AG04449 (cell line): ENCODE measurements at regions of chr12 and their contacts with region 1.

Region 1: DNA sequence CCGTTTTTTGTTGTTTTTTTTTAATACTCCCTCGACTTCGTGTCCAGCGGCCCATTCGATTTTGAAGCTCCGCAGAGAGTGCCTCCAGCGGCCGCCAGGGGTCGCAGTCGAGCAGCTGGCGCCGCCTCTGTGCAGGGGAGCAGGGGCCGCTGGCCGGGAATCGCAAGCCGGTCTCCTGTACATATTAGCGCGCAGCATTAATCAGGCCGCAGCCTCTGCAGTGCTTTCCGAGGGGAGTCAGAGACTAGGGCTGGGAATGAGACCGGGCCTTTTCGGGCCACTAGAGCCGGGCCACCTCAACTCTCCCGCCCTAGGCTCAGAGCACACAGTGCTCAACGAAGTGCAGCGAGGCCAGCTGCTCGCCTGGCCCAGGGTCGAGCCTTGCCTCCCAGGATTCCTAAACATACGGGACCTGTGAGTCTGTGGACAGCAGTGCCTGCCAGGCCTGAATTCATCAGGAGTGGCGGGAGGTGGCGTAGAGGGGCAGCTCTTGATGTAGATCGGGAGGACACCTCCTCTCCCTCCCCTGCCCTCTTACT is 81.8 kb downstream of the EMP1 start:
- DNase-seq: no peak
- H3K4me3 ChIP-seq: no peak overlapping the region
- CTCF ChIP-seq: peak; percentile 96

Region 2: DNA sequence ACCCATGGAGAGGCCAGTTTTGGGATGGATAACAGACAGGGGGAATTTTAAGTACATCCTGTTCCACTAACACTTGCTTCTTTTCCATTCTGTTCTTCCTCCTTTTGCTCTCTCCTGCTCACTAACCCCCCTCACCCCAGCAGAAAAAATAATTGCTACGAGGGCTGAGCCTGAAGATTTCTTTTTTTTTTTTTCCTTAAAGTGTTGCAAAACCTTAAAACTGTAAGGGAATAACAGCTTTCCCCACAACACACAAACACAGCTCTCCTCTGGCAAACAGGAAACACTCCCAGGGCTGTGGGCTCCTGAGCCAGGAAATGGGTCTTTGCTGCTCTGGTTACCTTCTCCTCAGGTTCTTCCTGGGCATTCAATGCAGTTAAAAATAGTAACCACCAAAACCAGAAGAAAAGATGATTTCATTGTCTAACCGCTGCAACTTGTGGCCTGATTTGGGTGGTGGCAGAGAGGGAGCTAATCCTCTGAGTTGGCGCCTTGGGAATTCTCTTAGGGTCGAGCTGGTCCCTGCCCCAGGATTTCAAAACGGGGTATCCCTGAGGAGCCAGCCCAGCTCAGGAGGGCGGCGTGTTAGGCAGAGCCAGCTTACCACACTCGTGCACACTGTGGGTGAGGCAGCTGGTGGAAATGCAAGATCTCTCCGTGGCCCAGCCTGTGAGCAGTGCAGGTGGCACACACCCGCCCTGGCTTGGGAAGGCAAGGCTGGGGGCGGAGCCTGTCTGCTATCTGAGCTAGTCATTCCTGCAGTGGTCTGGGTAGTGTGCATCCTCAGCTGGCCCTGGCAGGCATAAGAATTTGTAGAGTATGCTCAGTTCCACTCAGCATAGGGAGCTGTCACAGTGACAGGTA is 98.9 kb before region 1 on chr12:
- CTCF ChIA-PET with region 1: no interaction called
- POLR2A ChIA-PET with region 1: no interaction called
- DNase-seq: no peak
- H3K4me3 ChIP-seq: no peak overlapping the region
- CTCF ChIP-seq: no peak

Region 3: DNA sequence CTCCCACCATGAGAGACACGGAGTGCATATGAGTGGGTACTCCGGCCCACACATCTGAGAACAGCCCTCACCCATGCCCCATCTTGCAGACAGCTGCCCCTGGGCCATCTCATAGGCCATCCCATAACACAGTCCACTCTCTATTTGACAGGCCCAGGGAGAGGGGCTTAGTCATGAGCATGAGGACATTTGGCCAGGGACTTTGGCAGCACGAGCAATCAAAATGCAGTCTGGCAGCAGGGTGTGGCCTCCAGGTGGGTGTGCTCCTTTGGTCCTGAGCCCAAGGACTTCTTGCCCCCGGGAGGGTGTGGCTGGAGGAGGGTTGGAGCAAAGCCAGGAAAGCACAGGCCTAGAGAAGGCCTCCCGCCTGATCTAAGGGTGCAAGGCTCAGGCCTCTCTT is 56.2 kb before region 1 on chr12:
- CTCF ChIA-PET with region 1: no interaction called
- POLR2A ChIA-PET with region 1: no interaction called
- DNase-seq: no peak
- H3K4me3 ChIP-seq: no peak overlapping the region
- CTCF ChIP-seq: no peak

Region 4: GRCh38 chr12:13233830-13234641 is 44.3 kb before region 1 on chr12:
- CTCF ChIA-PET with region 1: no interaction called
- POLR2A ChIA-PET with region 1: no interaction called
- DNase-seq: no peak
- H3K4me3 ChIP-seq: no peak overlapping the region
- CTCF ChIP-seq: peak; percentile 80

Region 5: GRCh38 chr12:13293096-13293495 is 14.8 kb after region 1 on chr12:
- CTCF ChIA-PET with region 1: interaction called, 12 read pairs
- POLR2A ChIA-PET with region 1: no interaction called
- DNase-seq: no peak
- H3K4me3 ChIP-seq: no peak overlapping the region
- CTCF ChIP-seq: no peak